ENCODE measurements at regions of chr7 and their contacts with region 1.

Region 1: DNA sequence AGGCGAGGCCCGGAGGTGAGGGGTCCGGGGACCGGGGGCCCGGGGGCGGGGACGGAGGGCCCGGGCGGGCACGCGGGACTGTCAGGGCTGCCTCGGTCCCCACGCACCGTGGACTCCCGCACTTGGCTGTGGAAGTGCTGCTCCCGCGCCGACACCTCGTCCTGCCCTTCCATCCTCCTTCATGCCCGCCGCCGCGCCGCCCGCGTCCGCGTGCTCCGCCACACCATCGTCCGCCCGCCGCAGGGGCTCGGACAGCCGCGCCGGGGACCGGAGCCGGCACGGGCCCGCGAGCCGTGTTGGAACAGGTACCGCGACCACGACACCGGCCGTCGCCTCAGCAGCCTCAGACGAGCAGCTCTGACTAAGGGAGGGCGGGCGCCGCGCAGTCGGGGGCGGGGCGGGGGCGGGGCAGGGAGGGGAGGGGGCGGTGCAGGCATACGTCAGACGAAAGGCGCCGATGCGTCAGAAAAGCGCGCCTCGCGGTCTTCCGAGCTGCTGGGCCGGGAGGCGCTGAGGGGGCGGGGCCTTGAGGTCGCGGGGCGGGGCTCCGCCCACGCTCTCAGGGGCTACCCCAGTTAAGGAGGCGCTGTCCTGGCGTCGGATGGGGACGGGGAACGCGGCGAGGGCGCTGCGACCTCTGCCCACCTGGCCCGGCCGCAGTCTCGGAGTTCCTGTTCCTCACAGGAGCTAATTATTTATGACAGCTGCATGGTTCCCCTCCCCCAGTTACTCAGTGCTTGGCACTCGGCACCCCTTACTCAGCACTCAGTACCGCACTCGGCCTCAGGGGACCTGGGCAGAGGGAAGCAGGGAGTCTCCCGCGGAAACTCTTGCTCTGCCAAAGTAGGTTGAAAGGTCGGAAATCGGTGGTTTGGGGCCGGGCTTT is at the start of gene LMBR1:
- DNase-seq: peak; percentile 87 to 95
- H3K4me3 ChIP-seq: peak within 1 kb of the TSS; percentile 65
- H3K27ac ChIP-seq: peak within 1 kb of the TSS; percentile 24
- H3K4me1 ChIP-seq: peaks cover 29% of the 10 kb centered on the region
- H3K27me3 ChIP-seq: no peaks in the 10 kb centered on the region
- CTCF ChIP-seq: peak; percentile 67
- total RNA-seq, gene LMBR1: 85.0 and 107 TPM in 2 replicates

Region 2: GRCh38 chr7:156257904-156258303 is 635.2 kb before region 1 on chr7:
- CTCF ChIA-PET with region 1: no interaction called
- POLR2A ChIA-PET with region 1: interaction called, 15 read pairs
- intact Hi-C with region 1: no loop called
- DNase-seq: no peak
- H3K4me3 ChIP-seq: no peak overlapping the region
- H3K27ac ChIP-seq: no peak overlapping the region
- H3K4me1 ChIP-seq: no peaks in the 10 kb centered on the region
- H3K27me3 ChIP-seq: peaks cover 97% of the 10 kb centered on the region
- CTCF ChIP-seq: no peak

Region 3: GRCh38 chr7:156402255-156402654 is 490.8 kb before region 1 on chr7:
- CTCF ChIA-PET with region 1: no interaction called
- POLR2A ChIA-PET with region 1: no interaction called
- intact Hi-C with region 1: no loop called
- DNase-seq: no peak
- H3K4me3 ChIP-seq: no peak overlapping the region
- H3K27ac ChIP-seq: no peak overlapping the region
- H3K4me1 ChIP-seq: no peaks in the 10 kb centered on the region
- H3K27me3 ChIP-seq: peaks cover 79% of the 10 kb centered on the region
- CTCF ChIP-seq: no peak

Region 4: GRCh38 chr7:156903232-156903909 is 10.3 kb after region 1 on chr7:
- CTCF ChIA-PET with region 1: no interaction called
- POLR2A ChIA-PET with region 1: interaction called, 11 read pairs
- intact Hi-C with region 1: no loop called
- DNase-seq: peak; percentile 58 to 75
- H3K4me3 ChIP-seq: no peak overlapping the region
- H3K27ac ChIP-seq: no peak overlapping the region
- H3K4me1 ChIP-seq: peaks cover 13% of the 10 kb centered on the region
- H3K27me3 ChIP-seq: no peaks in the 10 kb centered on the region
- CTCF ChIP-seq: no peak

Region 5: DNA sequence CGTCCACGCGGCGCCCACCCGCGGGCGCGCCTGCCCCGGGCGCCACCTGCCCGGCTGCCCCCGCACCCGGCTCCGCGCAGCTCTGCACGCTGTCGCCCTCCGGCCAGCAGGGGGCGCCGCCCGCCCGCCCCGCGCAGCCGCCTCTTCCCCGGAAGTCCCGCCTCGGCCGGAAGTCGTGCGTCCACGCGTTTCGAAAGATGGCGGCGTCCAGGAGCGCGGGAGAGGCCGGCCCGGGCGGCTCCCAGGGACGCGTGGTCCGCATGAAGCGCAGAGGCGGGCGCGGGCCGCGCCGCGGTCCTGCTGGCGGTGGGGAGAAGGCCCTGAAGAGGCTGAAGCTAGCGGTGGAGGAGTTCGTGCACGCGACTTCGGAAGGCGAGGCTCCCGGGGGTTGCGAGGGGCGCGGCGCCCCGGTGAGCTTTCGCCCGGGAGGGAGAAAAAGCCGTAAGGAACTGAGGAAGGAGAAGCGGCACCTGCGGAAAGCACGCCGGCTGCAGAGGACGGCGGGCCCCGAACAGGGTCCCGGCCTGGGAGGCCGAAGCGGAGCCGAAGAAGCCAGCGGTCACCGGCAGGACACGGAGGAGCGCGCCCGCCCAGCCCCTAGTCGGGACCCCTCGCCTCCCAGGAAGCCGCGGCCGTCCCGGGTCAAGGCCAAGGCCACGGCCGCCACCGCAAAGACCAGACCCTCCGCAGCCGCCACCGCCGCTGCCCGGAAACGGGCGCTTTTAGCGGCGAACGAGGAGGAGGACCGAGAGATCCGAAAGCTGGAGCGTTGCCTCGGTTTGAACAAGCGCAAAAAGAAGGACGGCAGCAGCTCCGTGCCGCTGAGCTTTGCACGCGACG is 56.7 kb after region 1 on chr7 and contains the start of gene NOM1:
- CTCF ChIA-PET with region 1: no interaction called
- POLR2A ChIA-PET with region 1: no interaction called
- intact Hi-C with region 1: loop called (anchors 2 kb)
- DNase-seq: peak; percentile 75 to 91
- H3K4me3 ChIP-seq: peak within 1 kb of the TSS; percentile 90
- H3K27ac ChIP-seq: peak within 1 kb of the TSS; percentile 30; the same call in 1 of the 2 replicates
- H3K4me1 ChIP-seq: peaks cover 16% of the 10 kb centered on the region
- H3K27me3 ChIP-seq: peaks cover 16% of the 10 kb centered on the region; the same call in 1 of the 2 replicates
- CTCF ChIP-seq: peak; percentile 71
- total RNA-seq, gene NOM1: 25.4 and 28.3 TPM in 2 replicates

Measured in PC-9 (cell line).